Endothelial cell of umbilical vein (primary cell): ENCODE measurements at regions of chr18 and their contacts with region 1.

Region 1: DNA sequence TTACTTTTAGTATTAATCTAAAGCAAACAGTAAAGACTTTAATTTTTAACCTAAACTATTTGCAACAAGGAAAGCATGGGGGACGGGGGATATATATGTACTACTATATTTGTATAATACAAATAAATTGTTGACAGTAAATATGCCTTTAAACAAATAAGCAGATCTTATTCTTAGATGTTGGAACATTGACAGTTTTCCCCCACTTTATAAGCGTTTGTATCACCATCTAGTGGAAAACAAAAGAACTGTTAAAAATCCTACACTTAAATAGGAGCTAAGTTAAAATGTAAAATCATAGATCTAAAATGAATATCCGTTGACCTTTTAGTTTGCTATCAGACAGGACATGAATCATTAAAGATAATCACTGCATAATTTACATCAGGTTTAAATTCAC is 50.0 kb downstream of the RBBP8 start:
- DNase-seq: peak; percentile 68
- H3K4me3 ChIP-seq: no peak overlapping the region
- H3K27ac ChIP-seq: no peak overlapping the region
- H3K4me1 ChIP-seq: peaks cover 6% of the 10 kb centered on the region
- H3K27me3 ChIP-seq: no peaks in the 10 kb centered on the region
- CTCF ChIP-seq: peak in 1 of 2 donors; percentile 15
- POLR2A ChIP-seq: no peak

Region 2: GRCh38 chr18:22800551-22800951 is 182.6 kb before region 1 on chr18:
- CTCF ChIA-PET with region 1: interaction called, 165 read pairs
- POLR2A ChIA-PET with region 1: no interaction called
- dilution Hi-C with region 1: no loop called
- intact Hi-C with region 1: no loop called
- DNase-seq: no peak
- H3K4me3 ChIP-seq: no peak overlapping the region
- H3K27ac ChIP-seq: no peak overlapping the region
- H3K4me1 ChIP-seq: no peaks in the 10 kb centered on the region
- H3K27me3 ChIP-seq: peaks cover 33 to 48% of the 10 kb centered on the region in 2 experiments
- CTCF ChIP-seq: no peak
- POLR2A ChIP-seq: no peak

Region 3: GRCh38 chr18:22921772-22922171 is 61.4 kb before region 1 on chr18:
- CTCF ChIA-PET with region 1: interaction called, 43 read pairs
- POLR2A ChIA-PET with region 1: no interaction called
- dilution Hi-C with region 1: no loop called
- intact Hi-C with region 1: no loop called
- DNase-seq: no peak
- H3K4me3 ChIP-seq: no peak overlapping the region
- H3K27ac ChIP-seq: no peak overlapping the region
- H3K4me1 ChIP-seq: no peaks in the 10 kb centered on the region
- H3K27me3 ChIP-seq: no peaks in the 10 kb centered on the region
- CTCF ChIP-seq: no peak
- POLR2A ChIP-seq: no peak

Region 4: DNA sequence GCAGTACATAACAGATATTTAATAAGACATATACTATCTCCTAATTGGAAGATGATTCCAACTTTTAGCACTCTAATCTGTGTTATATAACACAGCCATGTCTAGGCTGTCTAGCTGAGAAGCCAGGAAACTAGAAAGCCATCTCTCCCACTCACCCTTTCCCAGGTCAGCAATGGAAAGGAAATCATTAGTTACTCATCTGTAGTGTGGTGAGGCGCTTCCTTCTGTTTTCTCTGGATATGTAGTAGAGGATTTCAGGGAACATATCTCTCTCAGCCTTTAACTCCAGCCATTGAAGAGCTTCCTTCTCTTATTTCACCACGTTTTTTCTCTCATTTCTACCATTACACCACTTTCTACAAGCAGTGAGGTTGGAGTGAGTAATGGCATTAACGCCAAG is 30.6 kb before region 1 on chr18:
- CTCF ChIA-PET with region 1: interaction called, 23 read pairs
- POLR2A ChIA-PET with region 1: no interaction called
- dilution Hi-C with region 1: no loop called
- intact Hi-C with region 1: no loop called
- DNase-seq: peak; percentile 50
- H3K4me3 ChIP-seq: no peak overlapping the region
- H3K27ac ChIP-seq: no peak overlapping the region
- H3K4me1 ChIP-seq: peaks cover 16% of the 10 kb centered on the region
- H3K27me3 ChIP-seq: no peaks in the 10 kb centered on the region
- CTCF ChIP-seq: no peak
- POLR2A ChIP-seq: no peak

Region 5: GRCh38 chr18:22999212-22999611 is 16.0 kb after region 1 on chr18:
- CTCF ChIA-PET with region 1: interaction called, 15 read pairs
- POLR2A ChIA-PET with region 1: no interaction called
- dilution Hi-C with region 1: no loop called
- intact Hi-C with region 1: no loop called
- DNase-seq: peak; percentile 69
- H3K4me3 ChIP-seq: no peak overlapping the region
- H3K27ac ChIP-seq: no peak overlapping the region
- H3K4me1 ChIP-seq: peaks cover 9% of the 10 kb centered on the region
- H3K27me3 ChIP-seq: no peaks in the 10 kb centered on the region
- CTCF ChIP-seq: no peak
- POLR2A ChIP-seq: no peak

Region 6: GRCh38 chr18:23071285-23071684 is 88.1 kb after region 1 on chr18:
- CTCF ChIA-PET with region 1: no interaction called
- POLR2A ChIA-PET with region 1: no interaction called
- dilution Hi-C with region 1: no loop called
- intact Hi-C with region 1: no loop called
- DNase-seq: no peak
- H3K4me3 ChIP-seq: no peak overlapping the region
- H3K27ac ChIP-seq: no peak overlapping the region
- H3K4me1 ChIP-seq: no peaks in the 10 kb centered on the region
- H3K27me3 ChIP-seq: peaks cover 0 to 2% of the 10 kb centered on the region in 2 experiments
- CTCF ChIP-seq: no peak
- POLR2A ChIP-seq: no peak

Region 7: GRCh38 chr18:23259701-23260582 is 276.8 kb after region 1 on chr18:
- CTCF ChIA-PET with region 1: no interaction called
- POLR2A ChIA-PET with region 1: no interaction called
- dilution Hi-C with region 1: no loop called
- intact Hi-C with region 1: no loop called
- DNase-seq: peak; percentile 99
- H3K4me3 ChIP-seq: no peak overlapping the region
- H3K27ac ChIP-seq: peak overlapping the region; percentile 87
- H3K4me1 ChIP-seq: peaks cover 36% of the 10 kb centered on the region
- H3K27me3 ChIP-seq: no peaks in the 10 kb centered on the region
- CTCF ChIP-seq: no peak
- POLR2A ChIP-seq: peak; percentile 50

Region 8: GRCh38 chr18:23422672-23423418 is 439.7 kb after region 1 on chr18:
- CTCF ChIA-PET with region 1: no interaction called
- POLR2A ChIA-PET with region 1: no interaction called
- dilution Hi-C with region 1: no loop called
- intact Hi-C with region 1: no loop called
- DNase-seq: no peak
- H3K4me3 ChIP-seq: no peak overlapping the region
- H3K27ac ChIP-seq: no peak overlapping the region
- H3K4me1 ChIP-seq: no peaks in the 10 kb centered on the region
- H3K27me3 ChIP-seq: no peaks in the 10 kb centered on the region
- CTCF ChIP-seq: no peak
- POLR2A ChIP-seq: no peak